Activated CD4-positive, alpha-beta memory T cell treated with anti-CD3 and anti-CD28 coated beads for 36 hours (primary cell): ENCODE measurements at regions of chr2 and their contacts with region 1.

Region 1: GRCh38 chr2:201194097-201194496 is 11.2 kb downstream of the CASP10 start:
- DNase-seq: no peak
- H3K4me3 Mint-ChIP-seq: no peak overlapping the region
- H3K27ac Mint-ChIP-seq: peak overlapping the region; percentile 33
- H3K4me1 Mint-ChIP-seq: peaks cover 53% of the 10 kb centered on the region
- H3K27me3 Mint-ChIP-seq: no peaks in the 10 kb centered on the region

Region 2: GRCh38 chr2:201057087-201057521 is 137.0 kb before region 1 on chr2:
- CTCF ChIA-PET with region 1: no interaction called
- POLR2A ChIA-PET with region 1: no interaction called
- intact Hi-C with region 1: no loop called
- DNase-seq: no peak
- H3K4me3 Mint-ChIP-seq: no peak overlapping the region
- H3K27ac Mint-ChIP-seq: no peak overlapping the region
- H3K4me1 Mint-ChIP-seq: peaks cover 32% of the 10 kb centered on the region
- H3K27me3 Mint-ChIP-seq: no peaks in the 10 kb centered on the region

Region 3: GRCh38 chr2:201208563-201209252 is 14.6 kb after region 1 on chr2:
- CTCF ChIA-PET with region 1: interaction called, 5 read pairs
- POLR2A ChIA-PET with region 1: no interaction called
- intact Hi-C with region 1: loop called (anchors 1 kb)
- DNase-seq: no peak
- H3K4me3 Mint-ChIP-seq: no peak overlapping the region
- H3K27ac Mint-ChIP-seq: no peak overlapping the region
- H3K4me1 Mint-ChIP-seq: peaks cover 15% of the 10 kb centered on the region
- H3K27me3 Mint-ChIP-seq: no peaks in the 10 kb centered on the region

Region 4: DNA sequence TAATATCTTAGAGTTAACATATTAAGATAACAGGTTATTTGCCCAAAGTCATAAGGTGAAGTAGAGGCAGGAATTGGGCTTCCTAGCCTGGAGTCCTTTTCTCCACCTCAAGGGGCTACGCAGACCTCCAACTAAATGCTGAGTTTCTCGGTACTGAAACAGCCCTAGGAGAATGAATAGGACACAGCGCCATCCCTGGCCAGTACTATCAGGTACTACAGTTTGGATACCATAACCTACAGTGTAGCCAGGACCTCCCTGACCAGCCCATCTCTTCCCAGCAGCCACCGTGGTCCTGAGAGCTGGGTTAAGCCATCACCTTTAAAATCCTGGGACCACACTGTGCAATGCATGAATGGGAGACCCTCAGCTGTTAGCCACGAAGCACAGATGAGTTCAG is 81.9 kb after region 1 on chr2:
- CTCF ChIA-PET with region 1: no interaction called
- POLR2A ChIA-PET with region 1: no interaction called
- intact Hi-C with region 1: no loop called
- DNase-seq: no peak
- H3K4me3 Mint-ChIP-seq: no peak overlapping the region
- H3K27ac Mint-ChIP-seq: no peak overlapping the region
- H3K4me1 Mint-ChIP-seq: peaks cover 57% of the 10 kb centered on the region
- H3K27me3 Mint-ChIP-seq: no peaks in the 10 kb centered on the region

Region 5: DNA sequence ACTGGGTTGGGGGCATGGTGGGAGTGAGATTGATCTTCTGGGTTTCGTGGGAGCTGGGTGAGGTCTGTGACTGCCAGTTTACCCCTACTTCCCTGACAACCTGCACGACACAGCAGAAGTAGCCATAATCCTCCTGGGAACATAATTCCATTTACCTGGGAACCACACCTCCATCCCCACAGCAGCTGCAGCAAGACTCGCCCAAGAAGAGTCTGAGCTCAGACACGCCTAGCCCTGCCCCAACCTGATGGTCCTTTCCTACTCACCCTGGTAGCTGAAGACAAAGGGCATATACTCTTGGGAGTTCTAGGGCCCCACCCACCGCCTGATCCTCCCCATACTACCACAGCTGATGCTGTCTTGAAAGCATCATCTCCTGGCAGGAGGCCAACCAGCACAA is 119.3 kb after region 1 on chr2:
- CTCF ChIA-PET with region 1: no interaction called
- POLR2A ChIA-PET with region 1: no interaction called
- intact Hi-C with region 1: no loop called
- DNase-seq: no peak
- H3K4me3 Mint-ChIP-seq: no peak overlapping the region
- H3K27ac Mint-ChIP-seq: no peak overlapping the region
- H3K4me1 Mint-ChIP-seq: no peaks in the 10 kb centered on the region
- H3K27me3 Mint-ChIP-seq: no peaks in the 10 kb centered on the region